ENCODE measurements at regions of chr9 and their contacts with region 1.

Region 1: GRCh38 chr9:34458013-34458958 is at the starts of genes DNAI1 and FAM219A:
- DNase-seq: peak; percentile 99
- H3K4me3 Mint-ChIP-seq: peak within 1 kb of the TSS; percentile 91
- H3K27ac Mint-ChIP-seq: peak within 1 kb of the TSS; percentile 85
- H3K4me1 Mint-ChIP-seq: peaks cover 47% of the 10 kb centered on the region
- H3K27me3 Mint-ChIP-seq: peaks cover 11% of the 10 kb centered on the region
- total RNA-seq, gene DNAI1: not detected in 2 replicates
- total RNA-seq, gene FAM219A: 14.7 and 16.5 TPM in 2 replicates

Region 2: GRCh38 chr9:32550562-32551433 is 1907.5 kb before region 1 on chr9:
- intact Hi-C with region 1: loop called (anchors 5 kb)
- DNase-seq: peak; percentile 91
- H3K4me3 Mint-ChIP-seq: peak overlapping the region; percentile 93
- H3K27ac Mint-ChIP-seq: peak overlapping the region; percentile 99
- H3K4me1 Mint-ChIP-seq: peaks cover 38% of the 10 kb centered on the region
- H3K27me3 Mint-ChIP-seq: no peaks in the 10 kb centered on the region

Region 3: GRCh38 chr9:34178520-34179212 is 279.6 kb before region 1 on chr9 and contains the start of gene UBAP1:
- intact Hi-C with region 1: loop called (anchors 1 kb)
- DNase-seq: peak; percentile 95
- H3K4me3 Mint-ChIP-seq: peak within 1 kb of the TSS; percentile 92
- H3K27ac Mint-ChIP-seq: peak within 1 kb of the TSS; percentile 94
- H3K4me1 Mint-ChIP-seq: peaks cover 5% of the 10 kb centered on the region
- H3K27me3 Mint-ChIP-seq: no peaks in the 10 kb centered on the region
- total RNA-seq, gene UBAP1: 30.0 and 33.4 TPM in 2 replicates

Region 4: GRCh38 chr9:34437006-34437925 is 21.0 kb before region 1 on chr9:
- intact Hi-C with region 1: loop called (anchors 1 kb)
- DNase-seq: peak; percentile 50
- H3K4me3 Mint-ChIP-seq: no peak overlapping the region
- H3K27ac Mint-ChIP-seq: no peak overlapping the region
- H3K4me1 Mint-ChIP-seq: peaks cover 6% of the 10 kb centered on the region
- H3K27me3 Mint-ChIP-seq: no peaks in the 10 kb centered on the region

Region 5: GRCh38 chr9:34591248-34591916 is 133.1 kb after region 1 on chr9:
- intact Hi-C with region 1: loop called (anchors 5 kb)
- DNase-seq: peak; percentile 67
- H3K4me3 Mint-ChIP-seq: peak overlapping the region; percentile 21
- H3K27ac Mint-ChIP-seq: no peak overlapping the region
- H3K4me1 Mint-ChIP-seq: peaks cover 15% of the 10 kb centered on the region
- H3K27me3 Mint-ChIP-seq: peaks cover 68% of the 10 kb centered on the region

Region 6: DNA sequence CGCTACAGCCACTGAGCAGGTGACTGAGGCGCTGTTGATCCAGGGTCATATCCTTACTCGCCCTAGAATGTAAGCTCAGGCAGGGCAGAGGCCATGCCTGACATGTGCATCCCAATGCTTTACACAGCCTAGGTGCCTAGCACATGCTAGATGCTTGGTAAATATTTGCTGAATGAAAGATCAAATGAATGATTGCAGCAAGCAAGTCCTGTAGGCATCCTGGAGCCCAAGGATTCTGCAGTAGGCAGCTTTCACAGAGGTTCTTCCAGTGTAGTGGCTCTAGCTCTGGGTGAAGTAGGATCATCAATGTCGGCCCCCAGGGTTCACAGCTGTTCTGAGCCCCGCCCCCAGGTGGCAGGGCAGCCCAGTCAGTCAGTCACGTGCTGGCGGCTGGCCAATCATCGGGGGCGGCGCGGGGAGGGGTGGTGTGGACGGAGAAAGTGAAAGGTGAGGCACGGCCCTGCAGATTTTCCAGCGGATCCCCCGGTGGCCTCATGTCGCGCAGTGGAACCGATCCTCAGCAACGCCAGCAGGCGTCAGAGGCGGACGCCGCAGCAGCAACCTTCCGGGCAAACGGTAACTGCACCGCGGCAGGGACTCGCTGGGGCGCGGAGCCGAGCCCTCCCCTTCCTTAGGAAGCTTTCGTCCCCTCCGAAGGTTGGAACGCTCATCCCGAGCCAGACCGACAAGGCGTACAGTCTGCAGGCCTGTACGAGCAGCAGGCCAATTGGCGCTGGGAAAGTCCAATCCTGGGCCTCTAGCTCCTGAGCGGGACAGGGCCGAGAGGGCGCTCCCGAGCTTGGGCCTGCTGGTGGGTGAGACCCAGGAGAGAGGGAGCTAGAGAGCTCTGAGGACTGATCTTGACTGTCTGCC is 188.2 kb after region 1 on chr9 and contains the start of gene GALT:
- intact Hi-C with region 1: loop called (anchors 2 kb)
- DNase-seq: peak; percentile 95
- H3K4me3 Mint-ChIP-seq: peak within 1 kb of the TSS; percentile 96
- H3K27ac Mint-ChIP-seq: peak within 1 kb of the TSS; percentile 88
- H3K4me1 Mint-ChIP-seq: peaks cover 33% of the 10 kb centered on the region
- H3K27me3 Mint-ChIP-seq: no peaks in the 10 kb centered on the region
- total RNA-seq, gene GALT: 72.0 and 73.7 TPM in 2 replicates

Region 7: DNA sequence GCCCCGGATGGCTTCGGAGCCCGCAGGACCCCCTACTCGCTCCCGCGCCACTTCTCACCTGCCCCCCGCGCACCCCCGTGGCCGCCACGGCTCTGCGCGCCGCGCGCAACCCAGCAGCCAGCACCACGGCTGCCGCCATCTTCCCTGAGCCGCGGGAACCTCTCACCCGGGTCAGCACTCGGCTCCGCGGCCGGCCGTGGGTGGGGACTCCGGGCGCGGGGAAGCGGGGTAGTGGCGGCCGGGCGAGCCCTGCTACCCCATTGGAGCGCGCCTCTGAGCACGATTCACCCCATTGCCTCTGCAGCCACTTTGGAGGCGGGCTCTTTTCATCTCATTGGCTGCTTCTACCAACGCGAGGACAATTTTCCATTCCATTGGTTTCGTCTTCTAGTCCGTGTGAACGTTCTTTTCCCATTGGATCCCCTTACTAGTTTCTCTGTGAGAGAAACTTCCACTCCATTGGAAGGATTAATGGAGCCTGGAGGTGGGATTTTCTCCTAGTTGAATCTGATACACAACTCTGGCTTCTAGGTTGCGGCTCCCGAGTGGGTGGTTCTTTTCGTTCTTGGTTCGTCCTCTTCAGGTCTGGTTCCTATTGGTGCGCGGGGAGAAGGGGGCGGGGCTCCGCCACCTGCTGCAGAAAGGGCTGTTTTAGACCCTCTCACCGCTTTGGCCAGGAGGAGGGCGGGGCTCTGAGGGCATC is 1356.7 kb after region 1 on chr9 and contains the start of gene HINT2:
- intact Hi-C with region 1: loop called (anchors 5 kb)
- DNase-seq: peak; percentile 97
- H3K4me3 Mint-ChIP-seq: peak within 1 kb of the TSS; percentile 91
- H3K27ac Mint-ChIP-seq: peak within 1 kb of the TSS; percentile 96
- H3K4me1 Mint-ChIP-seq: peaks cover 31% of the 10 kb centered on the region
- H3K27me3 Mint-ChIP-seq: peaks cover 6% of the 10 kb centered on the region
- total RNA-seq, gene HINT2: 47.5 and 55.3 TPM in 2 replicates

Measured in activated T-helper 1 cell treated with anti-CD3 and anti-CD28 coated beads, Interleukin-12 subunit alpha, Interleukin-12 subunit beta, Interleukin-2, Interleukin-4 antibody, amounts not matched to agents 30 ng/mL and 10 ng/mL and 1 ng/mL, durations not matched to agents 14 hours and 24 hours and 36 hours (primary cell).